ENCODE measurements at regions of chr15 and their contacts with region 1.

Region 1: GRCh38 chr15:38690689-38691332 is 126.2 kb upstream of the RASGRP1 start:
- DNase-seq: peak; percentile 89
- H3K4me3 Mint-ChIP-seq: no peak overlapping the region
- H3K27ac Mint-ChIP-seq: peak overlapping the region; percentile 98
- H3K4me1 Mint-ChIP-seq: peaks cover 83% of the 10 kb centered on the region
- H3K27me3 Mint-ChIP-seq: no peaks in the 10 kb centered on the region

Region 2: GRCh38 chr15:38242055-38242454 is 448.8 kb before region 1 on chr15:
- CTCF ChIA-PET with region 1: no interaction called
- DNase-seq: no peak
- H3K4me3 Mint-ChIP-seq: no peak overlapping the region
- H3K27ac Mint-ChIP-seq: no peak overlapping the region
- H3K4me1 Mint-ChIP-seq: no peaks in the 10 kb centered on the region
- H3K27me3 Mint-ChIP-seq: peaks cover 5% of the 10 kb centered on the region

Region 3: DNA sequence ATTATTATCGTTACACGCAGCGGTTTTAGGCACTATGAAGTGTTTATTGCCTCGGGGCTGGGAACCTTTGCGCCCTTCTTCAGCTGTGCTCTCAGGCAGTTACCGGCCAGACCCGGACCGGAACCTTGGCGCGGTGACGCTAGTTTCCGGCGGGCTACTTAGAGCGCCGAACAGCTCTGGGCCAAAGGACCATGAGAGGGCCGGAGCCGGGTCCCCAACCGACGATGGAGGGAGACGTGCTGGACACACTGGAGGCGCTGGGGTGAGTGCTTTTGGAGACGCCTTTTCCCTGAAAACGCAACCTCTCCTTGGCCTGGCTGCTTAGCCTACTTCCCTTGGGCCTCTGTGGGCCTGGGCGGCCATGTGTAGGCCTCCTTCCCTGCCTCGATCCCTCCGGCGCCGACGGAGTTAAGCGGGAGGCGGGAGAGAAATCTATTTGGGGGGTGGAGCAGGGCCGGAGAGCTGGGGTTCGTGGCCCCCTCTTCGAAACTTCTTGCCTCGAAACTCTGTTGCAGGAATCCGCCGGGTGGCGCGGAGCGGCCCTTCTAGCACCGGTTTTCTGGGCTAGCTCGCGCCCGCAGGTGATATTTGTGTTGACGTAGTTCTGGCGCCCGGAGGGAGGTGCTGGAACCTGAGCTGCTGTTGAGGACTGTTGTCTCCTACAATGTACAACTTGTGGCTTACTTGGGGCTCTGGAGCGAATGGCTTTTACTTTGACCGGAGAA is 236.7 kb before region 1 on chr15 and contains the start of gene FAM98B:
- CTCF ChIA-PET with region 1: interaction called, 13 read pairs
- DNase-seq: peak; percentile 88
- H3K4me3 Mint-ChIP-seq: peak within 1 kb of the TSS; percentile 93
- H3K27ac Mint-ChIP-seq: peak within 1 kb of the TSS; percentile 94
- H3K4me1 Mint-ChIP-seq: peaks cover 32% of the 10 kb centered on the region
- H3K27me3 Mint-ChIP-seq: peaks cover 18% of the 10 kb centered on the region

Region 4: DNA sequence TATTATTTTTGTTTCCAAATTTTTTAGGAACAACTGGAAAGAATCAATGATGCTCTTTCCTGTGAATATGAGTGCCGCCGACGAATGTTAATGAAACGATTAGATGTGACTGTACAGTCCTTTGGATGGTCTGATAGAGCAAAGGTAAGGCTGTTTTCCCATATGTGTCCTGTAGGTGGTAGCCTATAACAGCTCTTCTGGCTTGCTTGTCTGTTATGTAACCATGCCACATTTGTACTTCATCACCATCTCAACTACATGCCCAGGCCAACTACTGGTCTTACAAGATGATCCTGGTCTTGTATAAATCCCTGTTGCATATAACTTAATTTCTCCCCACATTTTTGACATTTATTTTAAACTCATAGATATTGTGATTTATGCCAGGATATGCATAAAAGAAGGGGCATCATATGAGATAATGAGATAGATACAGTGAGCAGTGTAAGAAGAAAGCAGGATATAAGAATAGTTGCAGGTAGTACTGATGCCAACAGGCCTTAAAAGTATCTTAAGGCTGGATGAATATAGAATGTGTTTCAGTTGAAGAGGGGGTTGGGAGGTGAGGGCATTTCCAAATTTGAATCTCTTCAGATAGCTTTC is 216.6 kb before region 1 on chr15:
- CTCF ChIA-PET with region 1: interaction called, 76 read pairs
- DNase-seq: peak; percentile 45
- H3K4me3 Mint-ChIP-seq: no peak overlapping the region
- H3K27ac Mint-ChIP-seq: peak overlapping the region; percentile 22
- H3K4me1 Mint-ChIP-seq: peaks cover 4% of the 10 kb centered on the region
- H3K27me3 Mint-ChIP-seq: no peaks in the 10 kb centered on the region

Region 5: DNA sequence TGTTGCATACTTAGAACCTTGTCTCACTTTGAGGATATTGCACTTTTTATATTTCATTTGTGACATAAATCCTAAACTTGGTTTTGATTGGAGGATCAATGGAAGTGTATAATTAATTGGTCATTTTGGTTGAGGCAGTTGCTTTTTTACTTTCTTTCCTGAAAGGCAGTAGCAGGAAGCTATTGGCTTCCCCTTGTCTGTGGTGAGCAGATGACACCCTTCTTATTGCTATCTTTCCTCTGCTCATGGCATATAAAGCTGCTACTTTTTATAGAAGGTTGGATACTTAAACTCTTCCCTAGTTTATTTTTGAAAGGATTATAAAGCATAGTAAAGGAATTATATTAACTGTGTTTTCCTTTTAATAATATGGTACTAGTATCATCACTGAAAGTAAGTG is 208.2 kb before region 1 on chr15:
- CTCF ChIA-PET with region 1: interaction called, 76 read pairs
- DNase-seq: no peak
- H3K4me3 Mint-ChIP-seq: no peak overlapping the region
- H3K27ac Mint-ChIP-seq: peak overlapping the region; percentile 3
- H3K4me1 Mint-ChIP-seq: peaks cover 28% of the 10 kb centered on the region
- H3K27me3 Mint-ChIP-seq: no peaks in the 10 kb centered on the region

Region 6: DNA sequence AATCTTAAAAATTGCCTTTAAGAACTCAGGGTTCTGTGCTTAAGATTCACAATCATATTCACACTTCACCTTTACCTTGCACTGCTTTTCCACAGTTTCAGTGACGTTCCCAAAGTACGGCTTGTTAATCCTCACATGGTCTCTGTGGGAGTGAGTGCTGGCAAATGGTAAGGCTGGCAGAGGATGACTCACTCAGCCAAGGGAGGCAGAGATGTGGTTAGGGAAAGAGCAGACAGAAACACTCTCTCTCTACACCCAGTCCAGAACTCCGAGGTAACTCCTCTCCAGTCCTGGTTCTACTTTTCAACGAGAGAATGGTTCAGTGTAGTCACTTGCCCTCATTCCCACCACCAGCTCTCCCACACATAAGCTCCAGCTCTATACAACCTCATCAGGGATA is 159.3 kb before region 1 on chr15:
- CTCF ChIA-PET with region 1: interaction called, 20 read pairs
- DNase-seq: no peak
- H3K4me3 Mint-ChIP-seq: no peak overlapping the region
- H3K27ac Mint-ChIP-seq: peak overlapping the region; percentile 44
- H3K4me1 Mint-ChIP-seq: peaks cover 82% of the 10 kb centered on the region
- H3K27me3 Mint-ChIP-seq: no peaks in the 10 kb centered on the region

Region 7: DNA sequence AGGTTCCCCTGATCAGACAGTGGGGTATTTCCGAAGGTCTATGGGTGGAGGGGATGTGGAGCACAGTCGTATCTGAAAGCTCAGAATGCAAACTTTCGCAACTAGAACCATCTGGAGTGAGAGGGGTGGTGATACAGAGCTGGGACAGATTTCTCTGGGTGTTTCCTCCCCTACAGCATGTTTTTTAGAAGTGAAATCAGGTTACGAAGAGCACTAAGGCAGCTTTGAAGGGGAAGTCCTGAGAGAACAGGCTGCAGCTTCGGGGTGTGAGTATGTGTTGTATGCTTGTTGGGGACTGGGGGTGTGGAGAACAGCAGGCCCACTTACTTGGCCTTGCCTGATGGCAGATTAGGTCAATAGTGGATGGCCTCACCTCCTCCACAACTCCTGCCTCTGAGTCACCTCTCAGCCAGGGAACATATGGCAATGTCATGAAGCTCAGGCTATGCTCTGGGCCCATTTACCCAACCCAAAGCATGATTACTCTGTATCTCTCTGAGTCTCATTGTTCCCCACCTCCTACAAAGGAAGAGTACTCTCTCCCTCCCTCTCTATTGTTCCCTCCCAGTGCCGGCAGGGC is 19.0 kb before region 1 on chr15:
- CTCF ChIA-PET with region 1: interaction called, 10 read pairs
- DNase-seq: peak; percentile 61
- H3K4me3 Mint-ChIP-seq: peak overlapping the region; percentile 53
- H3K27ac Mint-ChIP-seq: peak overlapping the region; percentile 98
- H3K4me1 Mint-ChIP-seq: peaks cover 80% of the 10 kb centered on the region
- H3K27me3 Mint-ChIP-seq: no peaks in the 10 kb centered on the region